Posterior vena cava (tissue), 2 donors: ENCODE measurements at regions of chr4 and their contacts with region 1.

Region 1: DNA sequence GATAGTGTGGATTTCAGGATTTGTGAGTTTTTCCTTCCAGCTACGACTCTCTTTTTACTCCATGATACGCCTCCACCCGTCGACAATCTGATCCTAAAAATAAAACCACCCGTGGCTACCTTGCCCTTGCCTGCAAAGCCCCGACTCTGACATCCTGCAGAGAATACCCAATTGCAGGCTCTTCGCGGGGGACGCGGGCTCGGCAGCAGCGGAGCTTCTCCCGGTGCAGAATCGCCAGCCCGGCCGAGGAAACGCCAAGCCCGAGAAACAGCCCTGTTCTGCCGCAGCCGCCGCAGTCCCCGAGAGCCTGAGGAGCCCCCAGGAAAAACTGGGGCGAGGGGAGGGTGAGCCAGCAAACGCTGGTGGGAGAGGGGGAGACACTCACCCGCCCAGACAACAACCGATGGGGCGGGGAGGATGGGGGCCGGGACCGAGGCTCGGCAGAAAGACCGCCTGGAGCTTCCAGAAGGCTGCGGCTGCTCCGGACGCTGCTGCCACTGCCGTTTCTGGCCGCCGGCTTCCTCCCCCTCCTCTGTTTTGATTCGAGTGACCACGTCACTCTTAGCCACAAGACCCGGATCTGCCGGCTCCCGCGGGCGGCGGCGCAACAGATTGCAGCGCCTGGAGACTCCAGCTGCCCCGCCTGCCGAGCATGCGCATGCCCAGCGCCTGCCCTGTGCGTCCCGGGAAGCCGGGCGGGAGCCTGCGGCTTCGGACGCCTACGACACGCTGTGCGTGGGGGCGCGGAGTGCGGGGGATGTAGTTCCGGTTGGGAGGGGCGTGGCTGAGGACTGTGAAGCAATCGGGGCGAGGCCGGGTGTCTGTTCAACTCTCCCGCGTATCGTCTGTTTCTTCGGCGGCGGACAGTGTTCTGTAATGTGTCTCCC is at the start of gene SMIM14:
- DNase-seq: peak; percentile 100
- total RNA-seq, gene SMIM14: 95.3 to 98.0 TPM

Region 2: DNA sequence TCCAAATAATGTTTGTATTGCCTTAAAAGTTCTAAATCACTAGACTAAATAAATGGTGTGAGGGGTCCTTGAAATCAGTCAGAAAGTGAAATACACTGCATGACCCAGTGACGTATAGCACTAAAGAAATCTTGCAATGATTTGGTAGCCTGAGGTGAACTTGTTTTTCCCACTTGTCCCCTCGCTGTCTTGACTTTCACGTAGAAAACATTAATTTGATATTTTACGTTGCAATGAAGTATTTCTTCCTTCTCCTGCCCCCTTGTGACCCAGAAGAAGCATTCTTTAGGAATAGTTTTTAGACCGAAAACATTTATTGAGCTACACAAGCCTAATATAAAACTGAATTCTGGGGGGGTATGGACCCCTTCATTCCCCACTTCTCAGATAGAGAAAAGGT is 228.2 kb before region 1 on chr4:
- intact Hi-C with region 1: no loop called
- DNase-seq: no peak

Region 3: GRCh38 chr4:39527273-39528060 is 111.1 kb before region 1 on chr4 and contains the start of gene UGDH:
- intact Hi-C with region 1: loop called in 1 of 2 experiments (anchors 5 kb)
- DNase-seq: peak; percentile 99
- total RNA-seq, gene UGDH: 107 to 167 TPM

Region 4: GRCh38 chr4:39613073-39613656 is 25.4 kb before region 1 on chr4:
- intact Hi-C with region 1: loop called in 1 of 2 experiments (anchors 2 kb)
- DNase-seq: no peak

Region 5: GRCh38 chr4:40446839-40447238 is 808.2 kb after region 1 on chr4:
- intact Hi-C with region 1: no loop called
- DNase-seq: no peak